Activated CD4-positive, alpha-beta T cell treated with anti-CD3 and anti-CD28 coated beads, Interleukin-2, amount 10 ng/mL, durations not matched to agents 24 days and 14 days (primary cell): ENCODE measurements at regions of chr6 and their contacts with region 1.

Region 1: DNA sequence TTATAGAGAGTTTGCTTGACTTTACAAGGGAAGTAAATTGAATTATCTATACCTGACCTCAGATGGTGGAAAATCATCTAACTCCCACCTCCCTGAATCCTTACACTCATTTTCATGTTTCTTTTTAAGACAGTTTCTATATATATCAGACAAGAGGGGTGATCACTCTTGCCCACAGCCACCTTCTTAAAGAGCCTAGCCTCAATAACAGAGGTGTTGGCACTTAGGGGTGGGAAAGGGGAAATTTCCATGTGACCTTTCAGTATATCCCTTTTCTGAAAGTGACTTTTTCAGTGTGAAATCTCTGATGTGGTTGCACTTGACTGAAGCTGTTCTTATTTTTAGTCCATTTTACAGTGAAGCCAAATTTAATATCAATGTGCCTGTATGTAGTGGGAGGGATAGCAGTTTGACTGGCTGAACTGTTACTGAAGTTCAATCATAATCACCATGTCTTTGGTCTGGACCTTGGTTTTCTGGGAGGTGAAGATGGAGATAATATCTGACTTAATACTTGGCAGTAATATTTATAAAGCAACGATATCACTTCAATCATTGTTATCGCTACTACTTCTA is 141.3 kb downstream of the MAP3K7 start:
- DNase-seq: peak; percentile 55
- H3K4me3 Mint-ChIP-seq: peak overlapping the region; percentile 22
- H3K27ac Mint-ChIP-seq: peak overlapping the region; percentile 86
- H3K4me1 Mint-ChIP-seq: peaks cover 41% of the 10 kb centered on the region
- H3K27me3 Mint-ChIP-seq: no peaks in the 10 kb centered on the region

Region 2: DNA sequence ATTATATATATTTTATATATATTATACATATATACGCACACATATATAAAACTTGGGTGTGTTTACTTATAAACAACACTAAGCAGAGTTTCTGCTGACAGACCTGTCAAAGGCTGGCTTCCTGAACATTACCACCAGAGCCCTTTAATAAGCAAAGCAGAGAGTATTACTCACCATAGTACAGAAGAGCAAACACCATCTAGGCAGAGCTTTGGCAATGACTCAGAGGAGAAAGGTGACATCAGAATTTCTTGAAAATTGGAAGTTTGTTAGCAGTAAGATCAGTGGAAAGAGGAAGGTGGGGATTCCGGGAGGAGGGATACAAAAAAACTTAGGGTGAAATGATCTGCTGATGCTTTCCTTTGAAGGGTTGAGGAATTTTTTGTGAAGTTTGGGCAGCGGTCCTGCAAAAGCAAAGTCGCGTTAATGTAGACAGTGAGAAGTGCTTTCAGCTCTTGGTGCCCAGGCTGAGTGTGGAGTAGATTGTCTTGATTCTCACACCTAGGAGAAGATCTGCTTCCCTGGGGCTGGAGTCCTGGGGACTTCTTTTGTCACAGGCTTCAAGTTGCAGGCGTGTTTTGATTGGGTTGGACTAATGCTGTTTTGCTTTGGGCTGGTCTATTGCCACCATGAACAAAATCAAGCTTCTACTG is 39.4 kb before region 1 on chr6:
- intact Hi-C with region 1: loop called (anchors 1 kb)
- DNase-seq: peak; percentile 77
- H3K4me3 Mint-ChIP-seq: peak overlapping the region; percentile 12
- H3K27ac Mint-ChIP-seq: peak overlapping the region; percentile 82
- H3K4me1 Mint-ChIP-seq: peaks cover 67% of the 10 kb centered on the region
- H3K27me3 Mint-ChIP-seq: no peaks in the 10 kb centered on the region

Region 3: DNA sequence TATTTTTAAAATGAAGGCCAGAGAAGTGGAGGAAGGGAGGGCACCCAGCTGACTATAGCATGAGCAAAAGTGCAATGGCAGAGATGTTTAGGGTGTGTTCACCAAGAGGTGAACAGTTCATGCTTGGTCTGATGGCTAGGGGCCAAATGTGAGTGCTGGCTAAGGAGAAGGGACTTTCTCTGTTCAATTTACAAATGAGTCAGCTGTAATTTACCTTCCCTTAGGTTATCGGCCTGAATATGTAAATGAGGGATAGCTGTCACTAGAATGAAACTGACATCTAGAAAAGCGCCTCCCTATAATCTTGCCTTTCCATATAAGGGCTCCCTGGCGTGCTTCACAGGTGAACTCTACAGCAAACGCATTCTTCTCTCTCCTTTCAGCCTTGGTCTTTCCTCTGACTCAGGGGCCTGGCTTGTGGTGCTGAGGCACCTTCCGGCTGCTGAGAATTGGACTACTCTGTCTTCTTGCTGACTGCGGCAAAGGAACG is 34.3 kb before region 1 on chr6:
- intact Hi-C with region 1: loop called (anchors 1 kb)
- DNase-seq: peak; percentile 86
- H3K4me3 Mint-ChIP-seq: peak overlapping the region; percentile 18
- H3K27ac Mint-ChIP-seq: peak overlapping the region; percentile 84
- H3K4me1 Mint-ChIP-seq: peaks cover 71% of the 10 kb centered on the region
- H3K27me3 Mint-ChIP-seq: peaks cover 2% of the 10 kb centered on the region

Region 4: DNA sequence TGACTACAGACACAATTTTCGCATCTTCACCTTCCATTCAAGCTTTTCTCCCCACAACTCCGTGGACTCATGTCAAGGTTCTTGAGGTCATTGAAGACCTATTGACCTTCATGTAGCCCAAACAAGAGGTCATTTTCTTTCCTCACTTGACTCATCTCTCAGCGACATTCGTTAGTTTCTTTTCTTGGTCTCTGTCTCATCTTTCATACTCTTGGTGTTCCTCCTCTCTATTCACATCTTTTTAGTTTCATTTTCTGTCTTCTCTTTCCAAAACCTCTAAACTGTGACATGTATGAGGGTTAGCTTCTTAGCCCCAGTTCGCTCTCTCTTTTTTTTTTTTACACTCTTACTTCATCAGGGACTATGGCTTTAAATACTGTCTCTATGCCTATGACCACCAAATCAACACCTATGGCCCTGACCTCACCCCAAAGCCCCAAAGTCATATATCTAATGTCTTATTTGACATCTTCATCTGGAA is 20.4 kb before region 1 on chr6:
- intact Hi-C with region 1: loop called (anchors 1 kb)
- DNase-seq: peak; percentile 78
- H3K4me3 Mint-ChIP-seq: peak overlapping the region; percentile 69
- H3K27ac Mint-ChIP-seq: peak overlapping the region; percentile 91
- H3K4me1 Mint-ChIP-seq: peaks cover 24% of the 10 kb centered on the region
- H3K27me3 Mint-ChIP-seq: no peaks in the 10 kb centered on the region

Region 5: DNA sequence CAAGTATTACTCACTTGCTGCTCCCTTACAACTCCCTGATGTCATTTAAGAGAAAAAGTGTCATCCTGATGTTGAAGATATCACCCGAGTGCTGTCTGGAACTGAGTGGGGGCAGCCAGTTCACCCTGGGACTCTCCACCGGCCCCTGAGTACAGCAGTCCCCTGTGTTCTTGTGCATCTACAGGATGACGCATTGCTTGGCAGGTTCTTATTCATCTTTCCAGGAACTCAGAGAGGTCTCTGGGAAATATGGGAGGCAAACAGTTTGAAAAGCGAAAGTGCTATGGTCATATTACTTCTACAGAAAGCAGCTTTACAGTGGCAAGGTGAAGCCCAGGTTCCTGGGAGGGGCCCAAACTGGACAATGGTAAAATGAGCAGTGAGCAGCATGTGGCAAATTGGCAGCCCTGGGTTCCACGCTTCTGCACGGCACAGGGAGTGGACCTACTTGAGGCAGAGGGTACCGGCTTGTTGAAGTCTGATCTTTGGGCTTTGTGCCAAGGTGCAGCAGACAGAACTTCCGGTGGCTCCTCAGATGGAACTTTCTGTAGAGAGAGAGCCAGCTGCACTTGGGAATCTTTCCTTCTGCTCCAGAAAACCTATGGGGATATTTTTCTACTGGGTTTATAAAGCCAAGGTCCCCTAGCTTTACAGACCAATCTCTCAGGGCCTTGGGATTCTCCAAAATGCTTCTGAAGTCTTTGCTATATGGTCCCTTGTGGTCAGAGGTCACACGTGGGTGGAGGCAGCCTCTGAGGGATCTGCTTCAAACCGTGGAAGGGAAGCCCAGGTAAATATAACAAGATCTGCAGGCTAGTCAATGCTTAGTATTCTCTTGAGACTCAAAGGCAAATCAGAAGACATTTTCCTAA is 13.0 kb after region 1 on chr6:
- intact Hi-C with region 1: loop called (anchors 1 kb)
- DNase-seq: peak; percentile 88
- H3K4me3 Mint-ChIP-seq: peak overlapping the region; percentile 54
- H3K27ac Mint-ChIP-seq: peak overlapping the region; percentile 91
- H3K4me1 Mint-ChIP-seq: peaks cover 66% of the 10 kb centered on the region
- H3K27me3 Mint-ChIP-seq: no peaks in the 10 kb centered on the region

Region 6: DNA sequence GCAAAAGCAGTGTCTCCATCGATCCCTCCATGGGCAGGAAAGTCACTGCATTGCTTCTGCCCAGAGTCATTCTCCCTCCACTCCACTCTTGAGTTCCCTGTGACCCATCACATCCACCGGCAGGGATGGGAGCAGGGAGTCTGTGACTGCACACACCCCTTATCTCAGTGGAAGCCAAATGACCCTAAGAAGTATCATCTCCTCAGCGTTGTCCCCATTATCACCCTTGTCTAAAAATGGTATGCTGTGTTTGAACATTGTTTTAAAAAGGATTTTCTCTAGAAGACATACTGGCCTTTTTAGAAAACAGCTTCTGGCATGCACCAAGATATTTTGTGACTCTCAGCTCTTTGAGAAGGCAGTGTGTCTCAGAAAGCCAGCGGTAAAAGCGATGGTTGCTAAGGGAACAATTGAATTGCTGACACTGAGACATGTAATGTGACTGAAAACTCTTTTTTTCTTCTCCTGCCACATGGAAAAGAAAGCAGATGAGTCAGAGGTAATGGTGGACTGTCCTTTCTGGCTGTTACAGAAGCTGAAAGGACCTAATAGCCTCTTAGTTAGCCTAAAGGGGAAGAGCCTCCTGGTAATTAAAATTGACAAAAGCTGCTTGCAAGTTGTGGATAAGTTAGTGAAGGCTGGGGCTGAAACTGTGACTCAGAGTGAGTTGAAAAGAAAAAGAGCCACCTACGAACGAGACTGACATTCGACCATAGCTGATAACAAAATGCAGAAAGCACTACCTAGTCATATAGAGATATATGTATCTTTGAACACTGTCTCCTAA is 20.7 kb after region 1 on chr6:
- intact Hi-C with region 1: loop called (anchors 1 kb)
- DNase-seq: peak; percentile 82
- H3K4me3 Mint-ChIP-seq: peak overlapping the region; percentile 46
- H3K27ac Mint-ChIP-seq: peak overlapping the region; percentile 90
- H3K4me1 Mint-ChIP-seq: peaks cover 80% of the 10 kb centered on the region
- H3K27me3 Mint-ChIP-seq: no peaks in the 10 kb centered on the region

Region 7: DNA sequence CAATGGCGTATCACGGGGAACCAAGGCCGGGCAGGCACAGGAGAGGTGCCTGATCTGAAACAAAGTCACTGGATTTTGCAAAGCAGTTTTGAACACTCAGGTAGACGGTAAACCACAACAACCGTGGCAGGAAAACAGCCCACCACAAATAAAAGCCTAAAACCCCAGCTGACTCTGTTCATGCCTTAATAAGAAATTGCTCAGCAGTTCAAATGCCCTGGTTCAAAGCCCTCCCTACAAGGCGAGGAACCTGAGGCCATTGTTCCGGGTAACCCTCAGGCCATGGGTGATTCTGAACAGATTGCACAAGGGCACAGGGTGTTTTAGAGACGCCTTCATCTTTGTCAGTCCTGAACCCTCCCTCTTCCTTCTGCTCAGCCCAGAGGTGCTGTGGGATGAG is 27.1 kb after region 1 on chr6:
- intact Hi-C with region 1: loop called (anchors 1 kb)
- DNase-seq: peak; percentile 85
- H3K4me3 Mint-ChIP-seq: peak overlapping the region; percentile 69
- H3K27ac Mint-ChIP-seq: peak overlapping the region; percentile 92
- H3K4me1 Mint-ChIP-seq: peaks cover 91% of the 10 kb centered on the region
- H3K27me3 Mint-ChIP-seq: no peaks in the 10 kb centered on the region